AG04450 (cell line): ENCODE measurements at regions of chr6 and their contacts with region 1.

Region 1: DNA sequence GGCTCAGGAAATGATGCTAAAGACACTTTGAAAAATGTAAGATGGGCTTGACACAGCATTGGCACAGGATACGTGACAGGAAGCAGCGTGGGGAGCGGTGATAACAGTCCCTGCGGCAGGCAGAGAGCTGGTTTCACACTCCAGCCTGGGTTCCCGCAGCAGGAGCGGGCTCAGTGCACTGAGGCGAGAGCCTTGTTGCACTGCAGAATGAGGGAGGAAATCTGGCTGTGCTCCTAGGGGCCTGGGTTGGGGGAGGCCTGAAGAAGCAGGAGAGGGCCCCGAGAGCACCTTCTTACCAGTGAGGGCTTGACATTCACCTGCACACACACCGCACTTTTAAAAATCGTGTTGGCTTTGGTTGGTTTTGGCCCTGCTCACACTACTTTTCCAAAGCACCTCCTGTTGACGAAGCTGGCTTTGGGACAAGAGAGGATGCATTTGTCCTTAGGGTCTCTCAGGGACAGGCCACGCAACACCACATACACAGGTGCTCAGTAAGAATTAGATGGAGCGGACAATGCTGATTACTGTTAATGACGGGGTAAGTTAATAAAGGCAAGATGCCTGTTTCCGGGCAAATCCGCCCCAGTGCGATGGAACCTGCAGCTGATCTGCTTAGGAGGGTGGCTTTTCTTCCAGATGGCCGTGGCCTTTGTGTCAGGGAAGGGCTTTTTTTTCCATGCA is 49.4 kb upstream of the ARMC2 start:
- DNase-seq: no peak
- H3K4me3 ChIP-seq: no peak overlapping the region
- H3K27ac ChIP-seq: no peak overlapping the region
- H3K27me3 ChIP-seq: peaks cover 3% of the 10 kb centered on the region
- CTCF ChIP-seq: no peak

Region 2: DNA sequence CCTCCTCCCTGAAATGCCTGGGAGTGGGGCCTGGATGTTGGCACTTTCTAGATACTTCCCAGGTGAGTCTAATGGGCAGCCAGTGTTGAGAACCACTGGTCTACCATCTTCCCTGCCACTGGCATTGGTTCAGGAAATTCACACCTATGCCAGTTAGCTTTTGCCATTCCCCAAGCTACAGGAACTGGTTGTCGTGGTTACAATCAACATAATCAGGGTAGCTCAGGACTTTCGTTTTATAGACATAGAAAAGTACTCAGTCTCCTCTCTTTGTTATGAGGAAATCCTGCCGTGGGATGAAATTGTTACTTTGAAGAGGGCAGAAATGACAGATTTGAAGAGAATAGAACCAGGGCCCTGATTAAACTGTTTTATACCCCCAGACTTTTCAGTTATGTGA is 366.0 kb before region 1 on chr6:
- CTCF ChIA-PET with region 1: no interaction called
- POLR2A ChIA-PET with region 1: no interaction called
- DNase-seq: no peak
- H3K4me3 ChIP-seq: no peak overlapping the region
- H3K27ac ChIP-seq: no peak overlapping the region
- H3K27me3 ChIP-seq: no peaks in the 10 kb centered on the region
- CTCF ChIP-seq: no peak

Region 3: GRCh38 chr6:108782179-108783041 is 16.4 kb before region 1 on chr6:
- CTCF ChIA-PET with region 1: interaction called, 10 read pairs
- POLR2A ChIA-PET with region 1: no interaction called
- DNase-seq: peak; percentile 30
- H3K4me3 ChIP-seq: peak overlapping the region; percentile 68
- H3K27ac ChIP-seq: peak overlapping the region; percentile 57
- H3K27me3 ChIP-seq: no peaks in the 10 kb centered on the region
- CTCF ChIP-seq: peak; percentile 85